AG04449 (cell line): ENCODE measurements at regions of chr16 and their contacts with region 1.

Region 1: GRCh38 chr16:87416826-87417527 is 24.8 kb downstream of the MAP1LC3B start:
- DNase-seq: no peak
- H3K4me3 ChIP-seq: no peak overlapping the region
- CTCF ChIP-seq: peak; percentile 46

Region 2: GRCh38 chr16:87278191-87279095 is 138.5 kb before region 1 on chr16:
- CTCF ChIA-PET with region 1: no interaction called
- POLR2A ChIA-PET with region 1: no interaction called
- DNase-seq: peak; percentile 31
- H3K4me3 ChIP-seq: no peak overlapping the region
- CTCF ChIP-seq: peak; percentile 97

Region 3: DNA sequence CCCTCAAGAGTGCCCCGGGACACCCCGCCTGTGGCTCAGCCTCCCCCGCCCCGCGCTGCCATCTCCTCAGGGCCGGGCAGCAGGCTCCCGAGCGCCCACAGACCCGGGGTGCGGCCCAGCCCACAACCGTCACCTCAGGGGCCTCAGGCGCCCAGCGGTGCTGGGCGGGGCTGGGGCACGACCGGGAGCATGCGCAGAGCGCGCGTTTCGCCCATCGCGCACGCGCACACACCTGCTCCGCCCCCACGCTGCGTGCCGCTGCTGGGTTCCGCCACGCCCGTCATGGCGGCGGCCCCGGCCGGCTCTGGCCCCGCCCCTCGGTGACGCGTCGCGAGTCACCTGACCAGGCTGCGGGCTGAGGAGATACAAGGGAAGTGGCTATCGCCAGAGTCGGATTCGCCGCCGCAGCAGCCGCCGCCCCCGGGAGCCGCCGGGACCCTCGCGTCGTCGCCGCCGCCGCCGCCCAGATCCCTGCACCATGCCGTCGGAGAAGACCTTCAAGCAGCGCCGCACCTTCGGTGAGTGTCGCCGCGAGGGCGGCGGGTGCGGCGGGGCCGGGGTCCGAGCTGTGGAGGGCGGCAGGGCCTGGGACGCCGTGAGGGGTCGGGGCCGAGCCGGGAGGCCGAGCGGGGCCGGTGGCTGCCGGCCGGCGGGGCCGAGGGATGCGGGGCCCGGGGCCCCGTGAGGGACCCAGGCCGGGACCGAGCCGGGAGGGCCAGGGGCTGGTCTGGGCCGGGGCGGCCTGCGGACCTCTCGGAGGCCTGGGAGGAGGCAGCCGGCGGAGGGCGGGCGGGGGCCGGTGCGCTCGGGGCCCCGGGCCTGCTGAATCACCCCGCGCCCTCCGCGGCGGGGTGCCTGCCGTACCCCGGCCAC is 24.8 kb before region 1 on chr16 and contains the start of gene MAP1LC3B:
- CTCF ChIA-PET with region 1: interaction called, 26 read pairs
- POLR2A ChIA-PET with region 1: no interaction called
- DNase-seq: peak; percentile 59
- H3K4me3 ChIP-seq: peak within 1 kb of the TSS; percentile 81
- CTCF ChIP-seq: no peak

Region 4: DNA sequence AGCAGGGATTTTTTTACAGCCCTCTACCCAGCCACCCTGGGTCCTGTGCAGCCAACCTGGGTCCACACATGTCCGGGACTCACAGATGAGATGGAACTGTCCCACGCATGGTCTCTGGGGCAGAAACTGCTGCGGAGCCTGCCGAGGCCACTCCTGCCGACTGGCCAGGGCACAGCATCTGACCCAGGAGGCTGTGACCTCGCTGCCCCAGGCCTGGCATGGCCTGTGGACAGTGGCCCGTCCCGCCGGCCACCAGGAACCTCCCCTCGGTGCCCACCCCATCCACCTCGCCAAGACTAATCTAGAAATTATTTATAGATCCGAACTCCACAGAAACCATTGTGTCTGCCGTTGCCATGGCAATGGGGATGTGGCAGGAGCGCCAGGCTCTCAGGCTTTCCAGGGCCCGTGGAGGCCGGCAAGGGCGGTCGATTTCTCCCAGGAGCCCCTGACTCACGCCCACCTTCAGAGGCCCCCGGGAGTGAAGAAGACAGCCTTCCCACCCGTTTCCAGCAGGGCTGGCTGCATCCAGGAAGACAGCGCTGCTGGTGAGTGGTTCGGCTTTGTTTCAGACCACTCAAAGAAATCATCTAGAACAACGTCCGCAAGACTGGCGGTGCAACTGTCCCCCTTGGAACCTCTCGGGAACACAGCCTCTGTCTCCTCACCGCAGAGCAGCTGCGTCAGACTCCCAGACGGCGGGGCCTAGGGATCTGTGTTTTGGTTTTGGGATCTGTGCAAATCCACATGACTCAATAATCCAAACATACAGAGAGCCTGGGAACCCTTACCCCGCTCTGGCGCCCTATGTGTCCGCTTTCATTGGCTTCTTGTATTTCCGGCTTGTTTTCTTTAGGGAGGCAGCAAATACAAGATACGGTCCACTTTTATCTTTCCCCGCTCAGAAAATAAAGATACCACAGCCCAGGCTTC is 124.2 kb after region 1 on chr16:
- CTCF ChIA-PET with region 1: interaction called, 10 read pairs
- POLR2A ChIA-PET with region 1: no interaction called
- DNase-seq: peak; percentile 14
- H3K4me3 ChIP-seq: no peak overlapping the region; the same call in 1 of the 2 replicates
- CTCF ChIP-seq: no peak

Region 5: DNA sequence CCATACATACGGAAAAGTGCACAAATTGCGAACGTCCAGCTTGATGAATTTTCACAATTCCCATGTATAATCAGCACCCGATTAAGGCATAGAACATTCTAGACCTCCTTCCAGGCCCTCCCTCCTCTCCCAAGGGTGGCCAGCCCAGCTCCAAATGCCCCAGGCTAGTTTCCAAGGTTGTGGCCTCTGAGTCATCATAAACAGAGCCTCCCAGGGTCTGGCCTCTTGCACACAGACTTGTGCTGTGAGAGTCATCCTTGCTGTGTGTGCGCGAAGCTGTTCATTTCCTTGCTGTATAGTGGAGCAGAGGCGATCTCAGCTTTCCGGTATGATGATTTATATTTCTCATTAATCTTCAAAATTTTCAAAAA is 164.8 kb after region 1 on chr16:
- CTCF ChIA-PET with region 1: interaction called, 17 read pairs
- POLR2A ChIA-PET with region 1: no interaction called
- DNase-seq: peak; percentile 87
- H3K4me3 ChIP-seq: no peak overlapping the region
- CTCF ChIP-seq: no peak

Region 6: DNA sequence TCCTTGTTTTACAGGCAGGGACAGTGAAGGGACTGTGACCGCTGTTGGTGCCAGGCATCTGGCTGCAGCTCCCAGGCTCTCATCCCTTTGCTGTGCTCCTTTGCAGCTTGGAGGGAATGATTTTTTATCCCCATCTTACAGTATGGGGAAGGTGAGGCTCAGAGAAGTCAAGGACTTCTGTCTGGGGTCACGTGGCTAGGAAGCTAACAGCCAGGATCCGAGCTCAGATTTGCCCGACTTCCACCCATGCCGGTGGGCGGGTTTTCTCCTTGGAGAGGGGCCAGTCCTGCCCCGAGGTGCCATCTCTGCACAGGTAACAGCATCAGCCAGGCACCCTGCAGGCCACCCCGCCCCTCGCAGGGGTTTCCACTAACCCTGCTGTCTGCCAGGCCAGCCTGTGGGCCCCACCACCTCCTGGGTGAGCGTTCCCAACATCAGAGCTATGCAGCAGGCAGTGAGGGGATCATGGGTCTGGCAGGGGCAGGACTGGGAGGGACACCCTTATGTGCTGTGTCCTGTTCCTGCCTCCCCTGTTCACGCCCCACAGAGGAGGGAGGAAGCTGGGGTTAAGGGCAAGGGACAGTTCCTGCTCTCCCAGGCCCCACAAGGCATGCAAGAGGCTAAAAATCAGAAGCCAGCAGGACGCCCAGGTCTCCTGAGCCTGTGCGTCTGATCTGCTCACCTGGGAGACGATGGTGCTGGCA is 210.7 kb after region 1 on chr16:
- CTCF ChIA-PET with region 1: interaction called, 10 read pairs
- POLR2A ChIA-PET with region 1: no interaction called
- DNase-seq: no peak
- H3K4me3 ChIP-seq: no peak overlapping the region
- CTCF ChIP-seq: no peak

Region 7: DNA sequence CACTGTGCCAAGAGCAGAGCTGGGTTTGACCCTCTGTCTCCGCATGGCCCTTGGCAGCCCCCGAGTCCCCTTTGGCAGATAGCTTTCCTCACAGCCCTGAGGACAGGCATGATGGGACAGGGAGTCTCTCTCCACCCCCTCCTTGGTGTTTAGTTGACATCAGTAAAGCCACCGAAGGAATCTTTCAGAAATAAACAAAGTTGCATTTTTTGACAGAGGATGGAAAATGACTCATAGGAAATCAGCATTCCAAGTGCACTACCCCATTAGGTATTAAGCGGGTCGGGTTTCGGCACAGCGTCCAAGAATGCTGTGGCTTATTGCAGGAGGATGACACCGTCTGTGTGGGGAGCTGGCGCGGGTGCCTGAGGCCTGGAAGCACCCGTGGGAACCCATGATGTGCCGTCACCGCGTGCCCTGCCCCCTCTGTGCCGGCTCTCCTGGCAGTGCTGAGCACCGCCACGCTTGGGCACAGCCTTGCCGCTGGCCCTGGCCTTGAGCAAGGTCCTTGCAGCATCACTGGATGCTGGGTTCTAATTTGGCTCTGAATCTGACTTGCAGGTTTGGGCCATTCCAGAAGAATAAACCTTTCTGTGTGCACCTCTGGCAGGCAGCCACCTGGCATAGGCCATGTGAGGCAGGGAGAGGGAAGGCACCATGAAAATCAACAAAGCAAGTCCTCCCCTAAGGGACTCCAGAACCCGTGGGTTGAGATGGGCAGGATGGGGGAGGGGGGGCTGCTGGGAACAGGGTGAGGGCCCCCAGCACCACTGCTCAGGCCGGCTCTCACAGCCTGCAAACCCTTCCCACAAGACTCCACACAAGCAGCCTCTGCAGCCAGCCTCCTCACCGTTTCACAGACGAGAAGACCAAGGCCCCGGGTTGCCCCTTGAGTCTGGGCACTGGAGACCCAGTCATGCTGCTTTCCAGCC is 915.3 kb after region 1 on chr16:
- CTCF ChIA-PET with region 1: no interaction called
- POLR2A ChIA-PET with region 1: no interaction called
- DNase-seq: peak; percentile 99
- H3K4me3 ChIP-seq: no peak overlapping the region
- CTCF ChIP-seq: no peak